ENCODE measurements at regions of chr3 and their contacts with region 1.

Region 1: GRCh38 chr3:45986303-45986982 is 9.2 kb downstream of the FYCO1 start:
- DNase-seq: peak; percentile 43 to 71
- ATAC-seq: peak; percentile 68 to 87 (median 84)
- H3K4me3 ChIP-seq: no peak overlapping the region
- H3K27ac ChIP-seq: peak overlapping the region; percentile 79 to 99 (median 92)
- H3K4me1 ChIP-seq: peaks cover 39 to 99% (median 90%) of the 10 kb centered on the region in 9 donors
- H3K27me3 ChIP-seq: no peaks in the 10 kb centered on the region
- CTCF ChIP-seq: no peak

Region 2: DNA sequence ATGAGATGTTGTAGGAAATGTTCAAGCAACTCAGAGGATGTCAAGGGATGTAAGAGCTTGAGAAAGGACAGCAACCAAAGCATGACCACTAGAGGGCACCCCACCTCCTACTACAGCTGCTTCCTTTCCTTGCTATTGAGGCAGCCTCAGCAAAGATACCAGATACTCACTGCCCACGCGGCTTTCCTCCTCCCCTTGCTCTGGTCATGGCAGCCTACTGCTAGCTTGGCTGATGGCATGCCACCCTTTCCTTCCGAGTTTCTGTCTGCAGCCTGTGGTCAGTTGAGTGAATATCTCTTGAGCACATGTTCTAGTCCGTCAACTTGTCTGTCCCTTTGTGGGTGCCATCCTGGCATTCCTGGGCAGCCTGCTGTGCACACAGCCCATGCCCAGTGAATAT is 47.6 kb before region 1 on chr3:
- intact Hi-C with region 1: loop called in 1 of 10 experiments (anchors 5 kb)
- DNase-seq: peak; percentile 59 to 82
- ATAC-seq: peak; percentile 72 to 89 (median 84)
- H3K4me3 ChIP-seq: no peak overlapping the region
- H3K27ac ChIP-seq: no peak overlapping the region
- H3K4me1 ChIP-seq: peaks cover 2 to 44% (median 24%) of the 10 kb centered on the region in 9 donors
- H3K27me3 ChIP-seq: no peaks in the 10 kb centered on the region
- CTCF ChIP-seq: peak; percentile 74 to 93 (median 89)

Region 3: GRCh38 chr3:46049116-46049515 is 62.7 kb after region 1 on chr3:
- intact Hi-C with region 1: no loop called
- DNase-seq: no peak
- ATAC-seq: no peak
- H3K4me3 ChIP-seq: no peak overlapping the region
- H3K27ac ChIP-seq: no peak overlapping the region
- H3K4me1 ChIP-seq: no peaks in the 10 kb centered on the region
- H3K27me3 ChIP-seq: peaks cover 0 to 3% (median 0%) of the 10 kb centered on the region in 7 donors
- CTCF ChIP-seq: no peak

Region 4: GRCh38 chr3:46078712-46079400 is 92.4 kb after region 1 on chr3:
- intact Hi-C with region 1: no loop called
- DNase-seq: peak; percentile 42 to 90
- ATAC-seq: peak; percentile 93 to 97 (median 95)
- H3K4me3 ChIP-seq: peak overlapping the region in 3 of 10 donors; percentile 23 to 28 (median 27)
- H3K27ac ChIP-seq: no peak overlapping the region
- H3K4me1 ChIP-seq: peaks cover 0 to 12% (median 0%) of the 10 kb centered on the region in 9 donors
- H3K27me3 ChIP-seq: no peaks in the 10 kb centered on the region
- CTCF ChIP-seq: peak; percentile 82 to 100 (median 98)

Region 5: GRCh38 chr3:46186471-46187340 is 200.3 kb after region 1 on chr3:
- intact Hi-C with region 1: no loop called
- DNase-seq: no peak
- ATAC-seq: no peak
- H3K4me3 ChIP-seq: no peak overlapping the region
- H3K27ac ChIP-seq: no peak overlapping the region
- H3K4me1 ChIP-seq: peaks cover 0 to 32% (median 0%) of the 10 kb centered on the region in 9 donors
- H3K27me3 ChIP-seq: peaks cover 0 to 12% (median 0%) of the 10 kb centered on the region in 7 donors
- CTCF ChIP-seq: no peak

Measured in heart right ventricle (tissue), 16 donors.